ENCODE measurements at regions of chr7 and their contacts with region 1.

Region 1: GRCh38 chr7:99631295-99632109 is 14.8 kb downstream of the ZSCAN25 start:
- DNase-seq: no peak
- H3K4me3 ChIP-seq: no peak overlapping the region
- H3K27ac ChIP-seq: no peak overlapping the region
- H3K4me1 ChIP-seq: no peaks in the 10 kb centered on the region
- H3K27me3 ChIP-seq: no peaks in the 10 kb centered on the region
- CTCF ChIP-seq: no peak
- POLR2A ChIP-seq: no peak

Region 2: DNA sequence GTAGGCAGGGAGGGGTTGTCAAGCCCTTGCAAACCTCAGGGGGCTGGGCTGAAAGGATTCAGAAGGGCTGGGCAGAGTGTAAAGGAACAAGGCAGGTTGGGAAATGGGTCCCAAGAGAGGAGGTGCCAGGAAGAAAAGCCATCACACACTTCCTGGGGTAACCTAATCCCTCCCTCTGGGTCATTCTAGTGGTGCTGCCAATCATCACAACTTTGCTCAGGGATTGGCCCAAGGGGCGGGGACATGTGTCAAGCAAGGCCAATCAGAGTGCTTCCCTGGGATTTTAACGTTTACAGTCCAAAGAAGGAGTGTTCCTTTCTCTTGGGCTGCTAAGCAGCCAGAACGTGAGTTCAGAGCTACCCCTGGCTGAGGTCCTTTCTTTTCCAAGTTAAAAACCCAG is 1071.5 kb before region 1 on chr7:
- intact Hi-C with region 1: no loop called
- DNase-seq: peak in 1 of 2 donors; percentile 3
- H3K4me3 ChIP-seq: no peak overlapping the region
- H3K27ac ChIP-seq: no peak overlapping the region
- H3K4me1 ChIP-seq: no peaks in the 10 kb centered on the region
- H3K27me3 ChIP-seq: peaks cover 0 to 8% of the 10 kb centered on the region in 2 donors
- CTCF ChIP-seq: no peak
- POLR2A ChIP-seq: no peak

Region 3: GRCh38 chr7:99707096-99707495 is 75.6 kb after region 1 on chr7:
- intact Hi-C with region 1: no loop called
- DNase-seq: no peak
- H3K4me3 ChIP-seq: no peak overlapping the region
- H3K27ac ChIP-seq: no peak overlapping the region
- H3K4me1 ChIP-seq: no peaks in the 10 kb centered on the region
- H3K27me3 ChIP-seq: no peaks in the 10 kb centered on the region
- CTCF ChIP-seq: no peak
- POLR2A ChIP-seq: no peak

Region 4: GRCh38 chr7:99901581-99902200 is 270.2 kb after region 1 on chr7:
- intact Hi-C with region 1: loop called (anchors 5 kb)
- DNase-seq: no peak
- H3K4me3 ChIP-seq: no peak overlapping the region
- H3K27ac ChIP-seq: no peak overlapping the region
- H3K4me1 ChIP-seq: no peaks in the 10 kb centered on the region
- H3K27me3 ChIP-seq: no peaks in the 10 kb centered on the region
- CTCF ChIP-seq: no peak
- POLR2A ChIP-seq: no peak